ENCODE measurements at regions of chr7 and their contacts with region 1.

Region 1: GRCh38 chr7:149662591-149663095 is 110.7 kb downstream of the ZNF467 start:
- DNase-seq: peak; percentile 78
- H3K4me3 ChIP-seq: no peak overlapping the region
- H3K27ac ChIP-seq: no peak overlapping the region
- H3K4me1 ChIP-seq: no peaks in the 10 kb centered on the region
- H3K27me3 ChIP-seq: peaks cover 3% of the 10 kb centered on the region
- CTCF ChIP-seq: peak; percentile 40 to 58 (median 43)
- EP300 ChIP-seq: no peak
- POLR2A ChIP-seq: no peak

Region 2: DNA sequence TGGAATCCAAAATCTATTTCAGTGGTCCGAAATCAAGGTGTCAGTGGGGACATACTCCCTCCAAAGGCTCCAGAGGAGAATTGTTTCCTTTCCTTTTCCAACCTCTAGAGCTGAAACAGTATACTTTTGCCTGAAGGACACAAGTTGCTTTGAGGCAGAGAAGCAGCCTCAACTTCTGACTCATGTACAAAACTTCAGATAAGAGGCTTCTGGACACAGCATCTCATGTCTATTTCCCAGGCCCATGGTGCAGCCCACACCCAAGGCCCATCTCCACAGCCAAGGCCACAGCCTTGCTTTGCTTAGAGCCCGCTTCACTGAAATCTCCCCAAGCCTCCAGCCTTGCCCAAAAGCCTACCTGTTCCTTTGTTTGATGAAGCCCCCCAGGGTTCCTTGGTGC is 41.9 kb after region 1 on chr7:
- in situ Hi-C with region 1: no loop called
- intact Hi-C with region 1: no loop called
- DNase-seq: no peak
- H3K4me3 ChIP-seq: no peak overlapping the region
- H3K27ac ChIP-seq: no peak overlapping the region
- H3K4me1 ChIP-seq: no peaks in the 10 kb centered on the region
- H3K27me3 ChIP-seq: no peaks in the 10 kb centered on the region
- CTCF ChIP-seq: no peak
- EP300 ChIP-seq: no peak
- POLR2A ChIP-seq: no peak

Region 3: DNA sequence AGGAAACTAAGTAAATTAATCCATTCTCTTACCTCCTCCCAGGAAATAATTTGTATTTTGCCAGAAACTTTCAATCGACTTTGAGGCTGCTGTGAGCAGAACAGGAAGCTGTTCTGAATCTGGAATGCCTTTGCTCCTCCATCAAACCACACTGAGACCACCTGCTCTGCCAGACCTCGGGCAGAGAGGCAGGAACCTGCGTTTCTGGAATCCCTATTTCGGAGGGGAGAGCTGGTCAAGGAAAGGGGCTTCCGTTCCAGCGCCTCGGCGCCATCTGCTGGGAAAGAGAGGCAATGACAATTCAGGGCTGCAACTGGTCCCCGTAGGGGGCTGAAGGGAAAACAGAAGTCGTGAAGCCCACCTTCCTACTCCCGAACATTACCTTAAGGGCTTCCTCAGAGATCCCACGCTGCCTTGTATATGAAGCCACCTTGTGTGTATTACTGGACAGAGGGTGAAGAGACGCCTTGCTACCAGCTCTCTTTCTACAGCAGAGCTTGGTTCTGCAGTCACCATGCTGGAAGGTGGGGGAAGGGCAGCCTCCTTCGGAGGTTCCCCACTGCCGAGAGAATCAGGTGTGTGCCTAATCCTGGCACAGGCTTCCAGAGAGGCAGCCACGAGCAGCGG is 79.5 kb after region 1 on chr7:
- in situ Hi-C with region 1: loop called in 1 of 4 experiments (anchors 5 kb)
- intact Hi-C with region 1: loop called (anchors 5 kb)
- DNase-seq: peak; percentile 70
- H3K4me3 ChIP-seq: peak overlapping the region in 3 of 4 donors; percentile 17 to 42 (median 18)
- H3K27ac ChIP-seq: no peak overlapping the region
- H3K4me1 ChIP-seq: peaks cover 0 to 14% (median 9%) of the 10 kb centered on the region in 4 donors
- H3K27me3 ChIP-seq: peaks cover 6% of the 10 kb centered on the region
- CTCF ChIP-seq: peak; percentile 71 to 90 (median 86)
- EP300 ChIP-seq: no peak
- POLR2A ChIP-seq: no peak

Region 4: GRCh38 chr7:149748076-149748874 is 85.6 kb after region 1 on chr7:
- in situ Hi-C with region 1: loop called in 1 of 4 experiments (anchors 5 kb)
- intact Hi-C with region 1: loop called (anchors 5 kb)
- DNase-seq: no peak
- H3K4me3 ChIP-seq: no peak overlapping the region
- H3K27ac ChIP-seq: no peak overlapping the region
- H3K4me1 ChIP-seq: no peaks in the 10 kb centered on the region
- H3K27me3 ChIP-seq: no peaks in the 10 kb centered on the region
- CTCF ChIP-seq: no peak
- EP300 ChIP-seq: no peak
- POLR2A ChIP-seq: no peak

Region 5: GRCh38 chr7:149873074-149873969 is 210.7 kb after region 1 on chr7 and contains the start of gene ATP6V0E2:
- in situ Hi-C with region 1: no loop called
- intact Hi-C with region 1: no loop called
- DNase-seq: peak; percentile 96
- H3K4me3 ChIP-seq: peak within 1 kb of the TSS; percentile 53 to 72 (median 68)
- H3K27ac ChIP-seq: peak within 1 kb of the TSS; percentile 85 to 92 (median 90)
- H3K4me1 ChIP-seq: peaks cover 6 to 19% (median 17%) of the 10 kb centered on the region in 4 donors
- H3K27me3 ChIP-seq: no peaks in the 10 kb centered on the region
- CTCF ChIP-seq: peak in 1 of 5 experiments; percentile 16
- EP300 ChIP-seq: no peak
- POLR2A ChIP-seq: peak; percentile 11
- total RNA-seq, gene ATP6V0E2: 1.9 to 56.7 (median 28.4) TPM